A673 (cell line): ENCODE measurements at regions of chr4 and their contacts with region 1.

Region 1: GRCh38 chr4:143531380-143531779 is 17.9 kb downstream of the SMARCA5 start:
- DNase-seq: peak; percentile 43
- H3K4me3 ChIP-seq: no peak overlapping the region
- H3K27ac ChIP-seq: no peak overlapping the region
- H3K4me1 ChIP-seq: no peaks in the 10 kb centered on the region
- H3K27me3 ChIP-seq: no peaks in the 10 kb centered on the region
- CTCF ChIP-seq: peak; percentile 58

Region 2: GRCh38 chr4:145107126-145107525 is 1575.7 kb after region 1 on chr4:
- CTCF ChIA-PET with region 1: no interaction called
- POLR2A ChIA-PET with region 1: no interaction called
- intact Hi-C with region 1: loop called (anchors 10 kb)
- DNase-seq: peak; percentile 21
- H3K4me3 ChIP-seq: no peak overlapping the region
- H3K27ac ChIP-seq: no peak overlapping the region
- H3K4me1 ChIP-seq: peaks cover 33% of the 10 kb centered on the region
- H3K27me3 ChIP-seq: no peaks in the 10 kb centered on the region
- CTCF ChIP-seq: no peak